ENCODE measurements at regions of chr7 and their contacts with region 1.

Region 1: GRCh38 chr7:1758028-1758858 is 88.2 kb downstream of the ELFN1 start:
- DNase-seq: peak; percentile 45
- ATAC-seq: peak; percentile 78
- H3K4me3 ChIP-seq: no peak overlapping the region
- H3K27ac ChIP-seq: no peak overlapping the region
- H3K4me1 ChIP-seq: peaks cover 34% of the 10 kb centered on the region
- H3K27me3 ChIP-seq: peaks cover 3 to 7% of the 10 kb centered on the region in 2 experiments; a peak in 3 of 5 replicates
- CTCF ChIP-seq: peak; percentile 83
- EP300 ChIP-seq: no peak
- POLR2A ChIP-seq: no peak
- RAD21 ChIP-seq: peak; percentile 80

Region 2: GRCh38 chr7:1579481-1580421 is 178.5 kb before region 1 on chr7:
- CTCF ChIA-PET with region 1: interaction called, 4 read pairs
- POLR2A ChIA-PET with region 1: no interaction called
- in situ Hi-C with region 1: loop called (anchors 10 kb)
- intact Hi-C with region 1: loop called (anchors 5 kb)
- DNase-seq: peak; percentile 41
- ATAC-seq: peak; percentile 98
- H3K4me3 ChIP-seq: no peak overlapping the region
- H3K27ac ChIP-seq: no peak overlapping the region
- H3K4me1 ChIP-seq: no peaks in the 10 kb centered on the region
- H3K27me3 ChIP-seq: peaks cover 0 to 12% of the 10 kb centered on the region in 2 experiments; a peak in 3 of 5 replicates
- CTCF ChIP-seq: peak; percentile 96
- EP300 ChIP-seq: no peak
- POLR2A ChIP-seq: no peak
- RAD21 ChIP-seq: peak; percentile 86

Region 3: DNA sequence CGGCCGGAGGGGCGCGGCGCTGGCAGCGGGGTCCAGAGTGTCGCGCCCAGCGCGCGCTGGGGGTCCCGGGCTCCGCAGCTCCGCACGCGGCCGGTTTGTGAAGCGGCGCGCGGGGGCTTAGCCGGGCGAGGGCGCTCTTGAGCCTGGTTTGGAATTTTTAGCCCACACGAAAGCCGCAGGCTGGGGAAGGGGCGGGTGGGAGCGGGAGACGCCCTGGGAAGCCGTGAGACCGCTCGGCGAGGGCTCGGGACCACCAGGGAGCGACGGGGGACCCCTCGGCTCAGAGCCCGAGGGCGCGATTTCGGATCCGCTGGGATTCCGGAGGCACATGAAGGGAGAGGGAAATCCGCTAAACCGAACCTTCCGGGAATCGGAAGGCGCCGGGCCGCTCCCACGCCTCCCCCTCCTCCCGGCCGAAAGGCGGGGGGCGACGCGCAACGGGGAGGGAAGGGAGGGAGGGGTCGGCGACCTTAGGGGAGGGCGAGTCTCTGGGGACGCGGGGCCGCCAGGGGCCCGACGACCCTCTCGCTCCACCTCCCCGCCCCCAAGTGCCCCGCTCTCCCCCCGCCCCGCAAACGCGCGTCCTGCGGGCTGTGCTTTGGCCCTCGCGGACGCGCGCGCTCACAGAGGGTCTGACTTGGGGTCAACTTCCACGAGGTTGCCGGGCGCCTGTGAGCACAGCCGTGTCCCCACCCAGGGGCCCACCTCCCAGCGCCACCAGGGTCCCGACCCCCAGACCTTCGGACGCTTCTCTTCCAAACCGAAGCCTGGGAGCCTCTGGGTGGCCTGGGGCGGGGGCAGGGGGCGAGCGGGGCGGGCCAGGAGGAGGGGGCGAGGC is 93.3 kb before region 1 on chr7:
- CTCF ChIA-PET with region 1: interaction called, 32 read pairs
- POLR2A ChIA-PET with region 1: no interaction called
- in situ Hi-C with region 1: loop called (anchors 5 kb)
- intact Hi-C with region 1: loop called (anchors 1 kb)
- DNase-seq: peak; percentile 16
- ATAC-seq: peak; percentile 28
- H3K4me3 ChIP-seq: peak overlapping the region; percentile 26 to 75 (median 38); a peak in 4 of 6 replicates
- H3K27ac ChIP-seq: no peak overlapping the region
- H3K4me1 ChIP-seq: peaks cover 22% of the 10 kb centered on the region; the same call in 1 of the 2 replicates
- H3K27me3 ChIP-seq: peaks cover 8 to 61% of the 10 kb centered on the region in 2 experiments
- CTCF ChIP-seq: peak; percentile 79
- EP300 ChIP-seq: no peak
- POLR2A ChIP-seq: no peak
- RAD21 ChIP-seq: peak; percentile 89

Region 4: DNA sequence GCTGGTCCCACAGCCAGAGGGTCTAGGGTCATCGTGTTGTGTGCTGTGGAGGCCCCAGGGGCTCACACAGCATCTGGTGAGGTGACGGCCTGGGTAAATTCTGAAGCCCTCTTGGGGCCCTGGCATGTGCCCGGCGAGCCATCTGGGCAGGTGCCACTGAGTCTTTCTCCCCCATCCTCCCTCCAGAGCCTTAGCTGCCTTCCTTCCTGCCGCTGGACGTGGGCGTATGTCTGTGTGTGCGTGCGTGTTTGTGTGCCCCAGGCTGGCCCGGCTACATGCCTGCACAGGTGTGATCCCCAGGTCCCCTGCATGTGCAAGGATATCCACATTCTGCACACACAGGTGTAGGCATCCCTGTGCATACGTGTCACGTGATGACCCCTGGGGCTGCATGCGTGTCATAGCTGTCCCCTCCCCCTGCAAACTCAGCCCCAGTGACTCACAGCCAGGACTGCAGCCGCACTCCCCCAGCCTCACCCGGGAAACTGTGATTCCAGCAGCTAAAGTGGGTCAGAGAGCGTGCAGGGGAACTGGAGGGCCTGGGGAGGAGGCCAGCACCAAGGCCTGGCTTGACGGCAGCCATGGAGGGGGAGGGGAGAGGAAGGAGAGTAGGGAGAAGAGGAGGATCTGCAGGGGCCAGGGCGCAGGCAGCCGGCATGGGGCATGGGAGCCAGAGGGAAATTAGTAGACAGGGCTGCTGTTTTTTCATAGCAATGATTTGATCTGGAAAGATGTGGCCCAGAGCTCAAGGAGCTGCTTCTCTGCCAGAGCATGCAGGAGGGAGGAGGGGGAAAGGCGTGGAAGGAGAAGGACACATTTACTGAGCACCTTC is 41.8 kb before region 1 on chr7:
- CTCF ChIA-PET with region 1: no interaction called
- POLR2A ChIA-PET with region 1: no interaction called
- in situ Hi-C with region 1: no loop called
- intact Hi-C with region 1: no loop called
- DNase-seq: peak; percentile 44
- ATAC-seq: peak; percentile 30
- H3K4me3 ChIP-seq: peak overlapping the region in 1 of 3 experiments; percentile 49; a peak in 2 of 6 replicates
- H3K27ac ChIP-seq: no peak overlapping the region
- H3K4me1 ChIP-seq: peaks cover 51% of the 10 kb centered on the region
- H3K27me3 ChIP-seq: no peaks in the 10 kb centered on the region; a peak in 3 of 5 replicates
- CTCF ChIP-seq: no peak
- EP300 ChIP-seq: no peak
- POLR2A ChIP-seq: no peak
- RAD21 ChIP-seq: no peak

Region 5: GRCh38 chr7:1812509-1813393 is 54.5 kb after region 1 on chr7:
- CTCF ChIA-PET with region 1: no interaction called
- POLR2A ChIA-PET with region 1: no interaction called
- in situ Hi-C with region 1: no loop called
- intact Hi-C with region 1: no loop called
- DNase-seq: peak; percentile 30
- ATAC-seq: peak; percentile 88
- H3K4me3 ChIP-seq: no peak overlapping the region; a peak in 1 of 6 replicates
- H3K27ac ChIP-seq: peak overlapping the region; percentile 51
- H3K4me1 ChIP-seq: peaks cover 51% of the 10 kb centered on the region
- H3K27me3 ChIP-seq: no peaks in the 10 kb centered on the region
- CTCF ChIP-seq: peak; percentile 76
- EP300 ChIP-seq: no peak
- POLR2A ChIP-seq: no peak
- RAD21 ChIP-seq: no peak

Measured in HepG2 (cell line).